Dorsolateral prefrontal cortex (tissue), 120 donors: ENCODE measurements at regions of chr7 and their contacts with region 1.

Region 1: GRCh38 chr7:123865517-123866117 is 20.6 kb downstream of the HYAL4 start:
- DNase-seq: peak in 3 of 10 donors; percentile 22 to 54 (median 32)
- H3K4me3 ChIP-seq: no peak overlapping the region
- H3K27ac ChIP-seq: no peak overlapping the region
- H3K27me3 ChIP-seq: no peaks in the 10 kb centered on the region
- CTCF ChIP-seq: peak; percentile 65 to 91 (median 80)

Region 2: GRCh38 chr7:123635551-123636359 is 229.9 kb before region 1 on chr7:
- intact Hi-C with region 1: loop called in 1 of 2 experiments (anchors 5 kb)
- DNase-seq: no peak
- H3K4me3 ChIP-seq: no peak overlapping the region
- H3K27ac ChIP-seq: no peak overlapping the region
- H3K27me3 ChIP-seq: peaks cover 0 to 6% (median 0%) of the 10 kb centered on the region in 45 donors
- CTCF ChIP-seq: peak in 46 of 56 donors; percentile 18 to 69 (median 40)

Region 3: GRCh38 chr7:123674399-123675180 is 191.0 kb before region 1 on chr7:
- intact Hi-C with region 1: loop called in 1 of 2 experiments (anchors 10 kb)
- DNase-seq: no peak
- H3K4me3 ChIP-seq: no peak overlapping the region
- H3K27ac ChIP-seq: peak overlapping the region in 33 of 59 donors; percentile 6 to 71 (median 37)
- H3K27me3 ChIP-seq: no peaks in the 10 kb centered on the region
- CTCF ChIP-seq: no peak

Region 4: GRCh38 chr7:123689250-123689649 is 176.4 kb before region 1 on chr7:
- intact Hi-C with region 1: loop called in 1 of 2 experiments (anchors 5 kb)
- DNase-seq: no peak
- H3K4me3 ChIP-seq: no peak overlapping the region
- H3K27ac ChIP-seq: no peak overlapping the region
- H3K27me3 ChIP-seq: no peaks in the 10 kb centered on the region
- CTCF ChIP-seq: no peak